ENCODE measurements at regions of chr4 and their contacts with region 1.

Region 1: DNA sequence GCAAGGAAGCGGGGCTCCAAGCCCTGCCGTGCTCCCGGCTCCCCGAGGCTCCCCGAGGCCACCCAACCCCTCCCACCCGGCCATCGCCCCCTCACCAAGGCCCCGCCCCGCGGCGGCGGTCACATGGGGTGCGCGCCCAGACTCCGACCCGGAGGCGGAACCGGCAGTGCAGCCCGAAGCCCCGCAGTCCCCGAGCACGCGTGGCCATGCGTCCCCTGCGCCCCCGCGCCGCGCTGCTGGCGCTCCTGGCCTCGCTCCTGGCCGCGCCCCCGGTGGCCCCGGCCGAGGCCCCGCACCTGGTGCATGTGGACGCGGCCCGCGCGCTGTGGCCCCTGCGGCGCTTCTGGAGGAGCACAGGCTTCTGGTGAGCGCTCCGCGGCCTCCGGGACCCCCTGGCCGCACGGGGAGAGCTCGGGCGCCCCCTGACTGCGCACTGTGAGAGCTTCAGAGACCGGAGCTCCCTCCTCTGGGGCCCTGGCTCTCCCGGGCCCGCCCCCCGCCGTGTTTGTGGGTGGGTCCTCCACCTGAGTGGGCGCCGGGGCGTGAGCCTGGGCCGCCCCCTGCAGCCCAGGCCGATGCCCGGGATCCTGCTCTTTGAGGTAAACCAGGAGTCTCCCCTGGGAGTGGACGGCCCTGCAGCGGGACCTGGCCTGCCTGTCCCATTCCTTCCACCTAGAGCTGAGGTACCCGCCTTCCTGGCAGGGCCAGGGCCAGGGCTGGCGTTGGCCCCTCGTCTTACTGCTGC is at the start of gene IDUA:
- DNase-seq: no peak
- ATAC-seq: peak; percentile 91
- H3K4me3 ChIP-seq: peak within 1 kb of the TSS; percentile 63
- H3K27ac ChIP-seq: no peak within 1 kb of the TSS; the same call in 1 of the 2 replicates
- H3K4me1 ChIP-seq: peaks cover 8% of the 10 kb centered on the region; the same call in 1 of the 2 replicates
- H3K27me3 ChIP-seq: no peaks in the 10 kb centered on the region
- CTCF ChIP-seq: peak; percentile 58 to 79 (median 69)
- EP300 ChIP-seq: 0 out of 4 replicates have a peak, but pooled peaks of 1 of the 2 experiments have one; percentile 7
- POLR2A ChIP-seq: peak; percentile 76
- RAD21 ChIP-seq: peak; percentile 73
- polyA plus RNA-seq, gene IDUA: 0.05 TPM in 1 of 2 experiments, not detected in the other

Region 2: DNA sequence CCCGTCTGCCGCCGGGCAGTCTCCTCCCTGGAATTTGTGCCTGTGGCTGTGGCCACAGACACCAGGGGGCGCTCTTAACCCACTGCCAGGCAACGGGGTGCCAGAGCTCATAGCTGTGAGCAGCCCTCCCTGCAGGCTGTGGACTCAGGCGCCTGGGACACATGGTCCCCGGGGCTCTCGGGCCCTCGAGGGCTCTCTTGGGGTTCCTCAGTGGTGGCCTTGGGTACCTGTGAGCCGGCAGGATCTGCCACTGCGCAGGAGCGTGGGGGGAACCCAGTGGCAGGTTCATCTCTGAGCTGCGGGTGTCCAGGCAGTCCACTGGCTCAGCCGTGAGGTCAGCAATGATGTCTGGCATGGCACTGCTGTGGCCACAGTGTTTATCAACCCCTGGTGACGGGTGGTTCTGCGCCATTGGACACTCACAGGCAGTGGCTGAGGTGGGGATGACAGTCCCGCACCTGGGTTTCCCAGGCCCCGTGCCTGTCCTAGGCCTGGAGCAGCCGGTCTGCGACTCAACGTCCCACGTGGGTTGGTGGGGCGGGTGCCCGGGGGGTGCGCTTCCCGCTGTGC is 244.2 kb before region 1 on chr4:
- CTCF ChIA-PET with region 1: interaction called, 46 read pairs
- POLR2A ChIA-PET with region 1: no interaction called
- RAD21 ChIA-PET with region 1: interaction called, 28 read pairs
- SMC1A ChIA-PET with region 1: interaction called, 9 read pairs
- in situ Hi-C with region 1: no loop called
- intact Hi-C with region 1: loop called (anchors 2 kb)
- DNase-seq: no peak
- ATAC-seq: peak; percentile 99
- H3K4me3 ChIP-seq: no peak overlapping the region
- H3K27ac ChIP-seq: no peak overlapping the region
- H3K4me1 ChIP-seq: no peaks in the 10 kb centered on the region
- H3K27me3 ChIP-seq: no peaks in the 10 kb centered on the region
- CTCF ChIP-seq: peak; percentile 82 to 94 (median 88)
- EP300 ChIP-seq: no peak
- POLR2A ChIP-seq: no peak
- RAD21 ChIP-seq: peak; percentile 77

Region 3: DNA sequence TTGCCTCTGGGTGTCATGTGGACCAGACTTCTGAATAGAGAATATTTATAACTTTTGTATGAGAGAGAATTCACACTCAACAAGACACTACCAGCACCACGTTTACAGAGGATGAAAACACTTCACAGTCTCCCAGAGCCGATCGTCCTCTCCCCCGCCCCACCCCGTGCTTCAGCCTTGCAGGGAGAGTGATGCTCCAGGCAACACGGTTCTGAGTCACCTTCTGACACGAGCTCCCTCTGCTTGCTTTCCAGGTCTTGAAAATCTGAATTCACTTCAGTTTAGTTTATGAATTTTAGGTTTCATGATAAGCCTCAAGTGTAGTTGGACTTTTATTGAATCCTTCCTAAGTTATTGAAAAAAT is 220.9 kb before region 1 on chr4:
- CTCF ChIA-PET with region 1: interaction called, 11 read pairs
- POLR2A ChIA-PET with region 1: no interaction called
- RAD21 ChIA-PET with region 1: interaction called, 4 read pairs
- SMC1A ChIA-PET with region 1: no interaction called
- in situ Hi-C with region 1: no loop called
- intact Hi-C with region 1: no loop called
- DNase-seq: no peak
- ATAC-seq: no peak
- H3K4me3 ChIP-seq: no peak overlapping the region
- H3K27ac ChIP-seq: no peak overlapping the region
- H3K4me1 ChIP-seq: no peaks in the 10 kb centered on the region
- H3K27me3 ChIP-seq: no peaks in the 10 kb centered on the region
- CTCF ChIP-seq: no peak
- EP300 ChIP-seq: no peak
- POLR2A ChIP-seq: no peak
- RAD21 ChIP-seq: no peak

Region 4: GRCh38 chr4:781493-782216 is 205.4 kb before region 1 on chr4:
- CTCF ChIA-PET with region 1: interaction called, 3 read pairs
- POLR2A ChIA-PET with region 1: interaction called, 4 read pairs
- RAD21 ChIA-PET with region 1: interaction called, 5 read pairs
- SMC1A ChIA-PET with region 1: no interaction called
- in situ Hi-C with region 1: no loop called
- intact Hi-C with region 1: loop called (anchors 1 kb)
- DNase-seq: peak; percentile 93
- ATAC-seq: peak; percentile 98
- H3K4me3 ChIP-seq: peak overlapping the region; percentile 92
- H3K27ac ChIP-seq: peak overlapping the region; percentile 96
- H3K4me1 ChIP-seq: peaks cover 11% of the 10 kb centered on the region
- H3K27me3 ChIP-seq: peaks cover 0 to 3% of the 10 kb centered on the region in 2 experiments; a peak in 1 of 4 replicates
- CTCF ChIP-seq: no peak
- EP300 ChIP-seq: no peak
- POLR2A ChIP-seq: peak; percentile 98
- RAD21 ChIP-seq: no peak

Region 5: GRCh38 chr4:891747-892146 is 95.3 kb before region 1 on chr4:
- CTCF ChIA-PET with region 1: interaction called, 5 read pairs
- POLR2A ChIA-PET with region 1: no interaction called
- RAD21 ChIA-PET with region 1: interaction called, 3 read pairs
- SMC1A ChIA-PET with region 1: no interaction called
- in situ Hi-C with region 1: no loop called
- intact Hi-C with region 1: loop called (anchors 10 kb)
- DNase-seq: no peak
- ATAC-seq: peak; percentile 32
- H3K4me3 ChIP-seq: no peak overlapping the region
- H3K27ac ChIP-seq: no peak overlapping the region
- H3K4me1 ChIP-seq: no peaks in the 10 kb centered on the region
- H3K27me3 ChIP-seq: no peaks in the 10 kb centered on the region
- CTCF ChIP-seq: 0 out of 6 replicates have a peak, but pooled peaks of 2 of the 3 experiments have one; percentile 8 to 14
- EP300 ChIP-seq: no peak
- POLR2A ChIP-seq: no peak
- RAD21 ChIP-seq: peak; percentile 24; the same call in 1 of the 2 replicates

Region 6: GRCh38 chr4:931960-932712 is 54.9 kb before region 1 on chr4 and contains the starts of genes GAK and TMEM175:
- CTCF ChIA-PET with region 1: interaction called, 8 read pairs
- POLR2A ChIA-PET with region 1: interaction called, 5 read pairs
- RAD21 ChIA-PET with region 1: interaction called, 48 read pairs
- SMC1A ChIA-PET with region 1: interaction called, 12 read pairs
- in situ Hi-C with region 1: no loop called
- intact Hi-C with region 1: loop called (anchors 2 kb)
- DNase-seq: peak; percentile 87
- ATAC-seq: peak; percentile 89
- H3K4me3 ChIP-seq: peak within 1 kb of the TSS; percentile 98
- H3K27ac ChIP-seq: peak within 1 kb of the TSS; percentile 90
- H3K4me1 ChIP-seq: peaks cover 27% of the 10 kb centered on the region
- H3K27me3 ChIP-seq: no peaks in the 10 kb centered on the region
- CTCF ChIP-seq: no peak
- EP300 ChIP-seq: no peak
- POLR2A ChIP-seq: peak; percentile 98
- RAD21 ChIP-seq: no peak
- polyA plus RNA-seq, gene GAK: 0.82 to 5.7 TPM
- polyA plus RNA-seq, gene TMEM175: 0.11 to 0.22 TPM

Measured in GM12878 (cell line).